B cell (primary cell): ENCODE measurements at regions of chr9 and their contacts with region 1.

Region 1: GRCh38 chr9:105447814-105448812 is at the start of gene FSD1L:
- DNase-seq: peak; percentile 90
- ATAC-seq: peak; percentile 91
- H3K4me3 ChIP-seq: peak within 1 kb of the TSS in 4 of 5 experiments; percentile 69 to 83 (median 74)
- H3K4me3 Mint-ChIP-seq: peak within 1 kb of the TSS; percentile 90
- H3K27ac ChIP-seq: peak within 1 kb of the TSS; percentile 21 to 24
- H3K27ac Mint-ChIP-seq: peak within 1 kb of the TSS; percentile 89
- H3K4me1 ChIP-seq: peaks cover 9 to 11% of the 10 kb centered on the region in 2 donors
- H3K4me1 Mint-ChIP-seq: peaks cover 17% of the 10 kb centered on the region
- H3K27me3 ChIP-seq: no peaks in the 10 kb centered on the region
- H3K27me3 Mint-ChIP-seq: no peaks in the 10 kb centered on the region
- CTCF ChIP-seq: no peak
- total RNA-seq, gene FSD1L: 9.8 and 15.2 TPM in 2 replicates

Region 2: DNA sequence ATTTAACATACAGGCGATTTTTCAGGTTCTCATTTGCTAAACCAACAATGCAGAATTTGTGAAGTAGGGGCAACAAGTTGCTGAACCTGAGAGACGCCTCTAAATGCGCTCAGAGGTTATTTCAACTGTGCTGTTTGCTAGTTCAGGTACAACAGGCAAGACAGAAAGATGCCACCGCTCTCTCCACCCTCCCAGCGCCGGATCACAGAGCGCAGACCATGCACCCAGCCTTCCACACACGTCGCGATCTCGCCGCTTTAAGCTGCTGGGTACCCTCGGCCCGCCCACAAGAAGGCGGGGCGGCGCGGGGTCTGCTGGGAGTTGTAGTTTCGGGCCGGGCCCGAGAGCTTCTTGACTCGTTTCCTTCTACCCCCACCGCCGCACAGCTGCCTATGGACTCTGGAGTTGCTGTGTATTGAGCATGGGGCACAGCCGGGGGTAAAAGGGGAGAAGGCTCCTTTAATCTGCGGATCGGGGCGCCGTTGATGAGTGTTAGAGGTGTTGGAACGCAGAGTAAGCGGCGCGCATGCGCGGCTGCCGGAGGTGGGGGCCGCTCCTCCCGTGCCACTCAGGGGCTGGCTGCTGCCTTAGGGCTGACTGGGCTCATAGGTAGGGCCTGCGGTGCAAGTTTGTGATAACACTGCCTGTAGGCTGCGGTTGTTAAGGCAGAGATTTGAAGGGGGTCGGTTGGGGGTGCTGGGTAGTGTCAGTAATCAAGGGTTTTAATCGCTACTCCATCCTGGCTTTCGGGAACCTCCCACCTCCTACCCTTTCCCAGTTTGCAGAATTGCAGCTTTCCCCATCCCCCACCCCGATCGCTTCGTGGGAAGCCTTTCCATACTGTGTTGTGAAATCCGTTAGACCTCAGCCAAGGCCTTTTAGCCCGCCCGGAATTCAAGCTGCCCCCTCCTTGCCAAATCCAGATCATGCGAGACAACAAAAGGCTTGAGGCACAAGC is 479.8 kb before region 1 on chr9:
- CTCF ChIA-PET with region 1: no interaction called
- POLR2A ChIA-PET with region 1: no interaction called
- intact Hi-C with region 1: loop called (anchors 2 kb)
- DNase-seq: peak; percentile 92
- ATAC-seq: peak; percentile 99
- H3K4me3 ChIP-seq: peak overlapping the region; percentile 68 to 86 (median 78)
- H3K4me3 Mint-ChIP-seq: peak overlapping the region; percentile 91
- H3K27ac ChIP-seq: no peak overlapping the region
- H3K27ac Mint-ChIP-seq: peak overlapping the region; percentile 71
- H3K4me1 ChIP-seq: peaks cover 4 to 14% of the 10 kb centered on the region in 2 donors
- H3K4me1 Mint-ChIP-seq: peaks cover 10% of the 10 kb centered on the region
- H3K27me3 ChIP-seq: peaks cover 0 to 4% (median 2%) of the 10 kb centered on the region in 4 experiments
- H3K27me3 Mint-ChIP-seq: peaks cover 21% of the 10 kb centered on the region
- CTCF ChIP-seq: no peak

Region 3: DNA sequence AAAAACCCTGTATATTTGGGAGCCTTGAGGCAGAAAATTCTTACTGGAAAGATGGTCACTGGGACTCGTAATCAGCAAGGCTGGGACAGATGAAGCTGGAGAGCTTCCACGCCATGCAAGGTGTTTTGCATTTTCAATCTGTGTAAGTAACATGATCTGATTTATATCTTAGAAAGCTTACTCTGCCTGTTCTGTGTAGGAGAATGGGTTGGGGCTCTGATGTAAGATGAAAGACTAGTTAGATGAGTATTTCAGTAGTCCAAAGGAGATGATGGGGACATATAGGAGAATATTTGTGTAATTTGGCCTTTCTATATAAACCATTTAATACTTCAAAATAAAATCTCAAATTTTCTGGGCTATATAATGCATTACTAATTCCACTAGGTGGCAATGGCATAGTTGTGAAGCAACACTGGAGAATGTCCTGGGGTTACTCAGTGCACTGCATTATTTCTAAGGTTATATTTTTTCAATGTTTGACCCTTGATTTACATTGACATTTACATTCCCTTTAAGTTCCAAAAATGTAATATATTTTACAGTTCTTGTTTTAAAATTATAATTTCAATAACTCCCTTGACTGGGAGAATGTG is 22.2 kb before region 1 on chr9:
- CTCF ChIA-PET with region 1: no interaction called
- POLR2A ChIA-PET with region 1: no interaction called
- intact Hi-C with region 1: no loop called
- DNase-seq: no peak
- ATAC-seq: no peak
- H3K4me3 ChIP-seq: no peak overlapping the region
- H3K4me3 Mint-ChIP-seq: no peak overlapping the region
- H3K27ac ChIP-seq: no peak overlapping the region
- H3K27ac Mint-ChIP-seq: no peak overlapping the region
- H3K4me1 ChIP-seq: no peaks in the 10 kb centered on the region
- H3K4me1 Mint-ChIP-seq: peaks cover 2% of the 10 kb centered on the region
- H3K27me3 ChIP-seq: no peaks in the 10 kb centered on the region
- H3K27me3 Mint-ChIP-seq: peaks cover 3% of the 10 kb centered on the region
- CTCF ChIP-seq: peak; percentile 41

Region 4: GRCh38 chr9:105557771-105558610 is 109.9 kb after region 1 on chr9 and contains the start of gene FKTN:
- CTCF ChIA-PET with region 1: no interaction called
- POLR2A ChIA-PET with region 1: no interaction called
- intact Hi-C with region 1: loop called (anchors 5 kb)
- DNase-seq: peak; percentile 87
- ATAC-seq: peak; percentile 98
- H3K4me3 ChIP-seq: peak within 1 kb of the TSS; percentile 76 to 99 (median 77)
- H3K4me3 Mint-ChIP-seq: peak within 1 kb of the TSS; percentile 98
- H3K27ac ChIP-seq: peak within 1 kb of the TSS; percentile 38 to 74
- H3K27ac Mint-ChIP-seq: peak within 1 kb of the TSS; percentile 92
- H3K4me1 ChIP-seq: peaks cover 7 to 8% of the 10 kb centered on the region in 2 donors
- H3K4me1 Mint-ChIP-seq: peaks cover 19% of the 10 kb centered on the region
- H3K27me3 ChIP-seq: no peaks in the 10 kb centered on the region
- H3K27me3 Mint-ChIP-seq: no peaks in the 10 kb centered on the region
- CTCF ChIP-seq: no peak
- total RNA-seq, gene FKTN: 16.2 and 18.3 TPM in 2 replicates